AG04450 (cell line): ENCODE measurements at regions of chr17 and their contacts with region 1.

Region 1: DNA sequence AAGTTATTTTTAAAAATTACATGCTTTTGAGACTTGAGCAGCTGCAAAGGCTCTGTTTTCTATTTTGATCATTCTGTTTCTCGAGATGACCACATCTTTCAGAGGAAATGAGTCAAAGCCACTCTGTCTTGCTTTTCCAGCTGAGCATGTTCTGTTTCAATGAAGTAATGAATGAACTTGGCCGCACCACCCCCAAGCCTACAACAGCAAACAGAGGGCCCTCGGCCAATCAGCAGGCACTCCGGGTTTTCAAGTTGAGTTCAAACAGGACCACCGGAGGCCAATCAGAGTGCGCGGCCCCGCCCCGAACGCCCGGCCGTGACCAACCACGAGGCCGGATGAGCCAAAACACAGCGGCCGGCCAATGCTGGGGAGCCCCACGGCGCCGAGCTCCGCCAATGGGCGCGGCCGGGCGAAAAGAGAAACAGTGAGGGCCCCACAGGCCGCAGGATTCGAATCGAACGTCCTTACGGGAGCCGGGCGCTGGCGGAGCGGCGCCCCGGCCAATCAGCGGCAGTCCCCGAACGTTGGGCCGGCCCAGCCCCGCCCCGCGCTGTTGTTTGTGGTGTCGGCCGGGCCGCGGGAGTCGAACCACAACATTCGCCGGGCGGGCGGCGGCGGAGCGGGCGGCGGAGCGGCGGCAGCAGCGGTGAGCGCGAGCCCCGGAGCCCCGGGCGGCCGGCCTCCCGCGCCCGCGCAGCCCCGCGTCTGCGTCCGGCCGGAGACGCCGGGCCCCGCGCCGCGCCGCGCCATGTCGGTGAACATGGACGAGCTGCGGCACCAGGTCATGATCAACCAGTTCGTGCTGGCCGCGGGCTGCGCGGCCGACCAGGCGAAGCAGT is at the start of gene UBALD2:
- DNase-seq: peak; percentile 100
- H3K4me3 ChIP-seq: peak within 1 kb of the TSS; percentile 80
- H3K27ac ChIP-seq: peak within 1 kb of the TSS; percentile 66
- H3K27me3 ChIP-seq: no peaks in the 10 kb centered on the region
- CTCF ChIP-seq: no peak
- polyA plus RNA-seq, gene UBALD2: 16.3 and 18.1 TPM in 2 replicates

Region 2: DNA sequence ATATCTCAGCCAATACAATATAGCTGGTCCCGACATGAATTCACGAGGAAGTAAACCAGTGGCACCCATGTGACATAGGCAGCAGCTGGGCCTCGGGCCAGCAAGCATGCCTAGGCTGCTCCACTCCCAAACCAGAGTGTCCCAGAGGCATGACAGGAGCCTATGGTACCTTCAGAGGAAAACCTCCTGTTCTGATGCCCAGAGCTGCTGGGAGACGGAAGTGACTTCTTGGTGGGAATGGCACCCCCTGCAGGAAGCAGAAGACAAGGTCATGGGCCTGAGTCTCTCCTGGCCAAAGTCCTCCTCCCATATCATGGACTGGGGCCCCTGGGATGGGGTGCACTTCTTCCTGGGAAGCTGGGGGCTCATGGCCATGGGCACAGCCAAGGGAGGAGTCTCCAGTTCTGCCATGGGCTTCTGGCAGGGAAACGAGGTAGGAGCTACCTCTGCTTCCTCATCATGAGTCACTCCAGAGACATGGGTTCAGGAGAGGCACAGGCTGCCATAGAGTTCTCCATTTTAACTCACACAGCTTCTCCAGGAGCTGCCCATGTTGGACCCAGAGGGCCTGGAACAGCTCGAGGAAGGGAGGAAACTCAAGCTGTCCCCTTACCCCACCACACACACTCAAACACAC is 337.6 kb before region 1 on chr17:
- CTCF ChIA-PET with region 1: no interaction called
- POLR2A ChIA-PET with region 1: no interaction called
- DNase-seq: no peak
- H3K4me3 ChIP-seq: no peak overlapping the region
- H3K27ac ChIP-seq: no peak overlapping the region
- H3K27me3 ChIP-seq: no peaks in the 10 kb centered on the region
- CTCF ChIP-seq: peak; percentile 23; the same call in 1 of the 2 replicates

Region 3: GRCh38 chr17:76121932-76122430 is 143.0 kb before region 1 on chr17:
- CTCF ChIA-PET with region 1: interaction called, 3 read pairs
- POLR2A ChIA-PET with region 1: interaction called, 10 read pairs
- DNase-seq: no peak
- H3K4me3 ChIP-seq: no peak overlapping the region
- H3K27ac ChIP-seq: no peak overlapping the region
- H3K27me3 ChIP-seq: peaks cover 5% of the 10 kb centered on the region
- CTCF ChIP-seq: no peak

Region 4: GRCh38 chr17:76252040-76252954 is 12.7 kb before region 1 on chr17:
- CTCF ChIA-PET with region 1: no interaction called
- POLR2A ChIA-PET with region 1: interaction called, 14 read pairs
- DNase-seq: peak; percentile 80
- H3K4me3 ChIP-seq: no peak overlapping the region
- H3K27ac ChIP-seq: peak overlapping the region; percentile 93
- H3K27me3 ChIP-seq: peaks cover 3% of the 10 kb centered on the region
- CTCF ChIP-seq: no peak

Region 5: GRCh38 chr17:76370261-76370993 is 105.5 kb after region 1 on chr17:
- CTCF ChIA-PET with region 1: no interaction called
- POLR2A ChIA-PET with region 1: no interaction called
- DNase-seq: peak; percentile 80
- H3K4me3 ChIP-seq: no peak overlapping the region
- H3K27ac ChIP-seq: peak overlapping the region; percentile 96
- H3K27me3 ChIP-seq: no peaks in the 10 kb centered on the region
- CTCF ChIP-seq: peak; percentile 72